ENCODE measurements at regions of chr1 and their contacts with region 1.

Region 1: DNA sequence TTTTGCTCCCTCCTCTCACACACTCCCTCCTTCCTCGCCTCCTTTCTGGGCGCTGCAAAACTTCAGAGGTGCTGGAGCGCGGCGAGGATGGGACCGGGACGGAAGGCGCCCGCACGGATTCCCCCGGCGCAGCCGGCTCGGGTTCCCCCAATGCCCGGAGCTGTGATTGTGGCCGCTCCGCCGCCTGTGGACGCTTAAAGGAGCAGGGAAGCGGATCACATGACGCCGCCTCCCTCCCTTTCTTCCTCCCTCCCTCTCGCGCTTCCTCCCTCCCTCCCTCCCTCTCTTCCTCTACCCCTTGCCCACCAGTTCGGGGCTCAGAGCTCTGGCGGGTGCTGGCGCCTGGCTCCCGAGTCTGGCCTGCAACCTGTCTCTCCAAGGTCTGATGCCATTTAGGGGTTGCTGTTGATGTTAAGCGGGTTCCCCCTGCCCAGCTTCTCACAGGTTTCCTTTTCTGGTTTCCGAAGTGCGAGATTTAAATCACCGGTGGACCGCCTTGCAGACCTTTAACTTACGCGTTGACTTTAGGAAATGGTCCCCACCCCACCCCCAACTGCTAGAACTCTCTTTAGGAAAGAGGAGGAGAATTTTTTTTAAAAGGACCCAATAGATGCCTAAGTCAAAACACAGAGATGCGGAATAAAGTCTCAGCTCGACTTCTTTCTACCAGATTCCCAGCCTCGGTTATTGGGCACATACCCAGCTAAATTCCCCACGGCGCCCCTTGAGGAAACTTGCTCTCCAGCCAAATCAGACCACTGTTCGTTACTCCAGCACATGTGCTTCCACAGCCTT is at the start of gene WLS:
- DNase-seq: peak; percentile 82 to 93 (median 92)
- ATAC-seq: peak; percentile 92 to 93
- H3K4me3 ChIP-seq: peak within 1 kb of the TSS; percentile 99
- H3K27ac ChIP-seq: peak within 1 kb of the TSS; percentile 77
- H3K4me1 ChIP-seq: peaks cover 7% of the 10 kb centered on the region
- H3K27me3 ChIP-seq: no peaks in the 10 kb centered on the region
- total RNA-seq, gene WLS: 73.4 to 102 (median 102) TPM

Region 2: GRCh38 chr1:68141071-68142021 is 91.2 kb before region 1 on chr1:
- intact Hi-C with region 1: loop called in 1 of 4 experiments (anchors 10 kb)
- DNase-seq: no peak
- ATAC-seq: peak; percentile 75 to 89
- H3K4me3 ChIP-seq: no peak overlapping the region
- H3K27ac ChIP-seq: peak overlapping the region; percentile 91
- H3K4me1 ChIP-seq: peaks cover 7% of the 10 kb centered on the region
- H3K27me3 ChIP-seq: no peaks in the 10 kb centered on the region

Region 3: GRCh38 chr1:68301471-68302001 is 69.0 kb after region 1 on chr1:
- intact Hi-C with region 1: loop called in 1 of 4 experiments (anchors 10 kb)
- DNase-seq: no peak
- ATAC-seq: no peak
- H3K4me3 ChIP-seq: no peak overlapping the region
- H3K27ac ChIP-seq: no peak overlapping the region
- H3K4me1 ChIP-seq: no peaks in the 10 kb centered on the region
- H3K27me3 ChIP-seq: no peaks in the 10 kb centered on the region

Region 4: DNA sequence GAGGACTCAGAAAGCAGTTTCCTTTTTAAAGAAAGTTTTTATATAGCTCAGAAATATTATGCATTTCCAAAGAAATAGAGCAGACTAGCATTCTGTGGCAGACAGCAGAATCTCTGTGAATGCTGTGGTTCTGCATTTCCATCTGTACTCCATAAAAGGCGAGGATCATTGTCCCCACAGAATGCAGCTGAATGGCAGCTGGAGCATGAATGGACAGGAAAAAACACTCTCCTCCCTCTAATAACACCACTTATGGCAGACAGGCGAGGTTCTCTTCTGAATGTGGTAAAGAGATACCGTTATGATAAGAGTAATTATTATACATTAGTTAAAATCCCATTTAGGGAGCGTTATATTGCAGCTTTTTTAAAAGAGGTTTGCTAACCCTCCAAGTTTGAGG is 81.2 kb after region 1 on chr1:
- intact Hi-C with region 1: loop called in 2 of 4 experiments (anchors 10 kb)
- DNase-seq: no peak
- ATAC-seq: no peak
- H3K4me3 ChIP-seq: no peak overlapping the region
- H3K27ac ChIP-seq: no peak overlapping the region
- H3K4me1 ChIP-seq: peaks cover 5% of the 10 kb centered on the region
- H3K27me3 ChIP-seq: no peaks in the 10 kb centered on the region

Region 5: DNA sequence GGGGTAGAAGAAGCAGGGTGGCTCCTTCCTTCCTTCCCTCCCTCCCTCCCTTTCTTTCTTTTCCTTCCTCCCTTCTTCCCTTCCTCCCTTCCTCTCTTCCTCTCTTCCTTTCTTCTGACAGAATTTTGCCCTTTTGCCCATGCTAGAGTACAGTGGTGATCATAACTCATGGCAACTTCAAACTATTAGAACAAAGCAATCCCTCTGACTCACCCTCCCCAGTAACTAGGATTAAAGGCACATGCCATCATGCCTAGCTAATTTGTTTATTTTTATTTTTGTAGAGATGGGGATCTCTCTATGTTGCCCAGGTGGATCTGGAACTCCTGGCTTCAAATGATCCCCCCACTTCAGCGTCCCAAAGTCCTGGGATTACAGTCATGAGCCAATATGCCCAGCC is 227.2 kb after region 1 on chr1:
- intact Hi-C with region 1: no loop called
- DNase-seq: no peak
- ATAC-seq: no peak
- H3K4me3 ChIP-seq: no peak overlapping the region
- H3K27ac ChIP-seq: no peak overlapping the region
- H3K4me1 ChIP-seq: no peaks in the 10 kb centered on the region
- H3K27me3 ChIP-seq: no peaks in the 10 kb centered on the region

Measured in right cardiac atrium (tissue), 5 donors.